ENCODE measurements at regions of chr6 and their contacts with region 1.

Region 1: GRCh38 chr6:89371849-89372505 is 19.5 kb upstream of the UBE2J1 start:
- DNase-seq: peak; percentile 74
- ATAC-seq: peak; percentile 93
- H3K4me3 Mint-ChIP-seq: no peak overlapping the region
- H3K27ac Mint-ChIP-seq: no peak overlapping the region
- H3K4me1 Mint-ChIP-seq: peaks cover 41% of the 10 kb centered on the region
- H3K27me3 Mint-ChIP-seq: no peaks in the 10 kb centered on the region
- CTCF ChIP-seq: peak; percentile 49

Region 2: DNA sequence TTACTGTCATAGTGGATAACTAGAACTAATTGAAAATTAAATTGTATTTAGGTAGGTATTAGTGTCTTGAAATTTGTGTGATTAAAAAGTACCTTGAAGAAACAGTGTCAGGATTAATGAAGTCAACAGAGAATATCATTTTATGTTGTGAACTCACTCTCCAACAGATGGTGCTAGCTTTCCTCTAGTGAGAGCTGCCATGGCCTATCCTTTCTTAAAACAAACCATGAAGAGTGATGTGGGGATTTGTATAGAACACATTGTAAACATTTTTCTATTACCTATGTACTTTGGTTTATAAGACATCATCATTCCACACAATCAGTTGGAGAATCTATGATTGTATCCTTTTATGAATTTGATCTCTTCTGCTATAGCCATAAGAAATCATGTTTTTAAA is 249.4 kb before region 1 on chr6:
- CTCF ChIA-PET with region 1: no interaction called
- POLR2A ChIA-PET with region 1: no interaction called
- intact Hi-C with region 1: loop called (anchors 1 kb)
- DNase-seq: no peak
- ATAC-seq: peak; percentile 31
- H3K4me3 Mint-ChIP-seq: no peak overlapping the region
- H3K27ac Mint-ChIP-seq: no peak overlapping the region
- H3K4me1 Mint-ChIP-seq: no peaks in the 10 kb centered on the region
- H3K27me3 Mint-ChIP-seq: no peaks in the 10 kb centered on the region
- CTCF ChIP-seq: no peak

Region 3: DNA sequence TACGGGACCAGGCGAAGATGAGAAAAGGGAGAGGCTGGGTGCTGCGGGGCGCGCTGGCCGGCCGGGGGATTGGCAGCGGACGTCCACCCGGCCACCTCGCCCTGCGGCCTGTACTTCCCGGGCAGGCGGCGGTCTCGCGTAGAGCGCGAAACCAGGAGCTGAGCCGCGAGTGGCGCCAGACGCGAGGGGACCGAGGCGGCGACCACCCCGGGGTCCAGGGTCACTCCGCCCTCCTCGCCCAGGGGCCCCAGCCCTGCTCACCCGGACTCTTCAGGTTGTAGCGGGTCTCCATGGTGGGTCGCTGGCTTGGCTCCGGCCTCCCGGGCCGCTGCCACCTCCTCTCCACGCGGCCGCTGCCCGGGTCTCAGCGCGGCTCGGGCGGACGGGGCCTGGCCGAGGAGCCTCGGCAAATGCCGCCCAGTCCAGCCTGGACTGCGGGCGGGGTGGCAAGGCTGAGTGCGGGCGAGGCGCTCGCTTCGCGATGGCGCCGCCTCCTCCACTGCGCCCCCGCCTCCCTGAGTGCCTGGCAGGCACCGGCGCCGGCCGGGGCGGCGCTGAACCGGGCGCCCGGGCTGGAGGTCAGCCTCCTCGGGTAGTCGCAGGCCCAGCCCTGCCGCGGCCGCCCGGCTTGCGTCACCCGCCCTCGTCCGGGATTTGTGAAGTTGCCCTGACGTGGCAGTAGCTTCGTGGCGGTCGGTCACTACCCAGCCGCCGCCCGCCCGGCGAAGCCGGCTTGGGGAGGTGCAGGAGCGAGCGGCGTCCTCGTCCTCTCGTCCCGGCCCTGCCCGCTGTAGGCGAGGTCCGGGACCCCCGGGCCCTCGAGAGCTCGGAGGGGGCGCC is 19.5 kb before region 1 on chr6 and contains the start of gene UBE2J1:
- CTCF ChIA-PET with region 1: interaction called, 64 read pairs
- POLR2A ChIA-PET with region 1: interaction called, 20 read pairs
- intact Hi-C with region 1: loop called (anchors 1 kb)
- DNase-seq: peak; percentile 83
- ATAC-seq: peak; percentile 77
- H3K4me3 Mint-ChIP-seq: peak within 1 kb of the TSS; percentile 94
- H3K27ac Mint-ChIP-seq: peak within 1 kb of the TSS; percentile 94
- H3K4me1 Mint-ChIP-seq: peaks cover 86% of the 10 kb centered on the region
- H3K27me3 Mint-ChIP-seq: no peaks in the 10 kb centered on the region
- CTCF ChIP-seq: no peak
- total RNA-seq, gene UBE2J1: 32.3 and 32.8 TPM in 2 replicates

Region 4: DNA sequence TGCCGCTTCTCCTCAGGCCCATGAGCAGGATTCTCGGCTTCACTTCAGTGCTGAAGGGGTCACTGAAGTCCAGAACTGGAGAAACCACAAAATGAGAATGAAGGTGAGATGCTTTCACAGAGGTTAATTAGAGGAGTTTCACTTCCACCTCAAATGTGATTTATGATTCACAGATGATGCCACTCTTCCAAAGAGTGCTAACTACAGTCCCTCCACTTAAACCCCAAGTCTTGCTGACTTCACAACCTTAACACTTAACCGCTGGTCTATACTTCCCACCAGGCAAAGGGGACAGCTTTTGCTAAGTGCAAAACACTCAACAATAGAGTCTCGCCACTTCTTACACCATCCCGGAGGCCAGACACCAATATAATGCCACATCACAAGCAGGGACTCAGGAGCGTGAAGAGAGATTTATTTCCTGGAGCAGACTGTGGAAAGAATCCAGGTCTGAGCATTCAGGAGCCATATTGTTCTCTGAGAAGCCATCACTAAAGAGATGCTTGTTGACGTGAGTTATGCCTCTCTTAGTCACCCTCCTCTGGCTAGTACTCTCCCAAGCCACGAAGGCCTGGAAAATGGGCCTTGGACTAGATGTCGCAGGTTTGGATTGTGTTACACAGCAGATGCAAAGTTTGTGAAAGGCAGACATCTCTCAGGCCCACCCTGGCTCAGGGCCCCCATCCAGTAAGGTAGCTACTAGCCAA is 15.7 kb after region 1 on chr6:
- CTCF ChIA-PET with region 1: interaction called, 5 read pairs
- POLR2A ChIA-PET with region 1: interaction called, 3 read pairs
- intact Hi-C with region 1: loop called (anchors 1 kb)
- DNase-seq: no peak
- ATAC-seq: peak; percentile 87
- H3K4me3 Mint-ChIP-seq: peak overlapping the region; percentile 60
- H3K27ac Mint-ChIP-seq: peak overlapping the region; percentile 33
- H3K4me1 Mint-ChIP-seq: peaks cover 15% of the 10 kb centered on the region
- H3K27me3 Mint-ChIP-seq: peaks cover 4% of the 10 kb centered on the region
- CTCF ChIP-seq: no peak

Region 5: DNA sequence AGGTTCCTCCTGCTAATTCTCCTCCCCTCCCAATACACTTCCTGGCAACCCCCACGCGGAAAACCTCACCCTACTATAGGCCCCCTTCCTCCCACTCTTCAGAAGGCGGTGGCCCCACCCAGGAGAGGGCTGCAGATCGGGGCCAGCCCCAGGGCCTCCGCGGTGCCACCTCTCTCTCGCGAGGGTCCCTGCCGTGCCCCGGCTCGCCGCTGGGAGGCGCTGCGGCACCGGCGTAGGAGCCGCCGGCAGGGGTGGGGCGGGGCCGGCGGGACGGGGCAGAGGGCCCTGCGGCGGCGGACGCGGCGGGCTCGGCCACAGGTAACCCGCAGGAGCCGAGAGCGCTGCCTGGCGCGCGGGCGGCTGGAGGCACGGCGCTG is 60.9 kb after region 1 on chr6 and contains the start of gene ANKRD6:
- CTCF ChIA-PET with region 1: interaction called, 16 read pairs
- POLR2A ChIA-PET with region 1: no interaction called
- intact Hi-C with region 1: loop called (anchors 1 kb)
- DNase-seq: peak; percentile 95
- ATAC-seq: peak; percentile 97
- H3K4me3 Mint-ChIP-seq: peak within 1 kb of the TSS; percentile 86
- H3K27ac Mint-ChIP-seq: peak within 1 kb of the TSS; percentile 41
- H3K4me1 Mint-ChIP-seq: peaks cover 11% of the 10 kb centered on the region
- H3K27me3 Mint-ChIP-seq: peaks cover 4% of the 10 kb centered on the region
- CTCF ChIP-seq: no peak
- total RNA-seq, gene ANKRD6: 6.6 and 9.6 TPM in 2 replicates

Region 6: DNA sequence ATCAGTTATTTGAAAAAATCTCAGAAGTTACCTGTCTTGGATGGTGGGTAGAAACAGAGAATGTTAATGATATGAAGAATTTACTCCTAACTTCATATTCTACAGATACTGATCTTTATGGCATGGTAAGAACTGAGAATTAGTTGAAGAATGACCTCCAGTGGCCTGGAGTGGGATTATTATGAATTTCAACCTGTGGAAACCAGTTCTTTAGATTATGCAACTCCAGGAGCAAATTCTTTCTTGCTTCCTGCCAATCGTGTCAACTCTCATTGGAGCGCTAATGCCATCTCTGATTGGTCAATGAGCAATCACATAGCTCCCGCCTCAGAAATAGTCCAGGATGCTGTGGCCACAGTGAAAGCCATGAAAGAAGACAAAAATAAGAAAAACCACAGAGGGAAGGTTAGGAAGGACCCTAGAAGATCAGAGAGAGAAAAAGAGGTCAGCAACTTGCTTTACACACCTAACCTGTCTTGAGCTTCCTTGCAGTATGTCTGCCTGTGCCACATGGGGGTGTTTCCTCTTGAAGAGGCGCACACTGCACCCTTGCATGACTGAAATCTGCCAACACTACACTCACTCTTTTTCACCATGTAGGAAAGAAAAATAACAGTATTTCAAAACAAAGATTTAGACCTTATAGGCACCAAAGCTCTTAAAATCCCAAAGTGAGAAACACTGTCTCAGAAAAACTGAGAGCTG is 226.2 kb after region 1 on chr6:
- CTCF ChIA-PET with region 1: no interaction called
- POLR2A ChIA-PET with region 1: no interaction called
- intact Hi-C with region 1: no loop called
- DNase-seq: no peak
- ATAC-seq: no peak
- H3K4me3 Mint-ChIP-seq: no peak overlapping the region
- H3K27ac Mint-ChIP-seq: no peak overlapping the region
- H3K4me1 Mint-ChIP-seq: peaks cover 30% of the 10 kb centered on the region
- H3K27me3 Mint-ChIP-seq: no peaks in the 10 kb centered on the region
- CTCF ChIP-seq: no peak

Region 7: GRCh38 chr6:89970609-89971337 is 598.8 kb after region 1 on chr6:
- CTCF ChIA-PET with region 1: no interaction called
- POLR2A ChIA-PET with region 1: interaction called, 10 read pairs
- intact Hi-C with region 1: no loop called
- DNase-seq: no peak
- ATAC-seq: peak; percentile 61
- H3K4me3 Mint-ChIP-seq: no peak overlapping the region
- H3K27ac Mint-ChIP-seq: no peak overlapping the region
- H3K4me1 Mint-ChIP-seq: peaks cover 12% of the 10 kb centered on the region
- H3K27me3 Mint-ChIP-seq: no peaks in the 10 kb centered on the region
- CTCF ChIP-seq: no peak

Measured in activated B cell treated with CpG ODN at 0.5 μM for 24 hours (primary cell).